ENCODE measurements at regions of chr21 and their contacts with region 1.

Region 1: DNA sequence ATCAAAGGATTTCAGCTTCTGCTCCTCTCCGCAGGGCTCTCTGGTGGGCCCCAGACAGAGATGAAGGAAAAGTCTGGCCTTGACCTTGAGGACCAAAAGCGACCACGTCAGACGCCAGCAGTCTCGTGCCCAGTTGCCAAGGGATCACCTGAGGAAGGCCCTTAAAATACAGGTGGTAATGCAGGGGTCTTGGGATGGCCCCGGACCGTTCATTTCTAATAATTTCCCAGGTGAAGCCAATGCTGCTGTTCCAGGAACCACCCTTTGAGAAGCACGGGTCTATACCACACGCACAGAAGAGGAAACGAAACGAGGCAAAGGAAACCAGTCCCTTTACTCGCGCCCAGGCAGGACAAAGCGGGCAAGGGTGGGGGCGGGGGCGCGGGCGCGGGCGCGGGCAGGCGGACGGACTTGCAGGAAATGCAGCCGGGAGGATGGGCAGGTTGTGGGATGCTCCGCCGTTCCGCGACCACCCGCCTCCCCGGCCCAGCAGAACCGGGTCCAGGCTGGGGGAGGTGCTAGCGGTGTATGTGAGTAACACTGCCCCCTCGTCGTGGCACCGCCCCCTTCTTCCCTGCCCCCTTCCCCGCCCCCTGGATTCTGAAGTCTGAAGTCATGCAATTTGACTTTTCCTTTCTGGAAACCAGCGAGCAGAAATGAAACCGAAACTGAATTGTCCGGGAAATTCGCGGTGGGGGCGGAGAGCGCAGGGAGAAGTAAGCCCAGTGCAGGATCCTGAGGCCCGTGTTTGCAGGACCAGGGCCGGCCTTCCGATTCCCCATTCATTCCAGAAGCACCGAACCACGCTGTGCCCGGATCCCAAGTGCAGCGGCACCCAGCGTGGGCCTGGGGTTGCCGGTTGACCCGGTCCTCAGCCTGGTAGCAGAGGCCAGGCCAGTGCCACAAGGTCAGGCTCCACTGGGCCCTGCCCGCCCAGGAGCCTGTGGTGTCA is 5.9 kb upstream of the MX1 start:
- DNase-seq: peak; percentile 53 to 93
- H3K4me3 ChIP-seq: peak overlapping the region; percentile 79 to 82
- H3K27ac ChIP-seq: peak overlapping the region; percentile 83 to 88
- H3K4me1 ChIP-seq: no peaks in the 10 kb centered on the region
- H3K27me3 ChIP-seq: no peaks in the 10 kb centered on the region
- CTCF ChIP-seq: no peak

Region 2: GRCh38 chr21:41247561-41248284 is 172.5 kb before region 1 on chr21:
- intact Hi-C with region 1: loop called (anchors 2 kb)
- DNase-seq: peak; percentile 78 to 94
- H3K4me3 ChIP-seq: peak overlapping the region; percentile 36 to 45
- H3K27ac ChIP-seq: peak overlapping the region; percentile 85 to 92
- H3K4me1 ChIP-seq: peaks cover 25 to 43% of the 10 kb centered on the region in 2 donors
- H3K27me3 ChIP-seq: no peaks in the 10 kb centered on the region
- CTCF ChIP-seq: no peak

Region 3: DNA sequence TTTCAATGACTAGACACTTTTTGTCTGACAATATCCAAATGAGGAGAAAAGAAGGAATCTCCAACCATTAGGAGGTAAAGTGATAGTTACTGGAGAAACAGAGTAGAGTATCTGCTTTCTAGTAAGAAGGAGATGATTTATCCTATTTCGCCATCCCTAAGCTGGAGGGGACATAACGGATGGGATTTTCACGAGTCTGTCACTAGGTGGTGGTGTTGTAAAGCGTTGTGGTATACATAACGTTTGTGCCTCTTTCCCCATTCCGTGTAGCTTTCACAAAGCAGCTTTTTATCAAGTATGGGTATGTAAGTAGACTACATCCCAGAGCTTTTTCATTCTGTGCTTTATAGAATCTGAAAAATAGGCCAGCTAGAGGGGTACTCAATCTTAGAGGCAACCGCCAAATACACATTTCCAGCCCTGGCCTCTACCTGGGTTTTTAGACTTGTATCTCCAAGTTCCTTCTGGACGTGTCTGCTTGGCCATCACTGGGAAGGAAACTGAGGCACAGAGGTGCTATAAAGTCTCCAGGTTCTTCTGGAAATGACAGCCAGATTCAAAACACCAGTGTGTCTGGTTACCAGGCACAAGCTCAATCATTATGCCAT is 136.9 kb before region 1 on chr21:
- intact Hi-C with region 1: loop called (anchors 10 kb)
- DNase-seq: peak in 1 of 2 donors; percentile 70
- H3K4me3 ChIP-seq: no peak overlapping the region
- H3K27ac ChIP-seq: no peak overlapping the region
- H3K4me1 ChIP-seq: no peaks in the 10 kb centered on the region
- H3K27me3 ChIP-seq: no peaks in the 10 kb centered on the region
- CTCF ChIP-seq: peak; percentile 67 to 82 (median 76)

Region 4: GRCh38 chr21:41431788-41432548 is 11.8 kb after region 1 on chr21:
- intact Hi-C with region 1: no loop called
- DNase-seq: no peak
- H3K4me3 ChIP-seq: no peak overlapping the region
- H3K27ac ChIP-seq: no peak overlapping the region
- H3K4me1 ChIP-seq: peaks cover 0 to under 1% of the 10 kb centered on the region in 2 donors
- H3K27me3 ChIP-seq: no peaks in the 10 kb centered on the region
- CTCF ChIP-seq: no peak

Region 5: DNA sequence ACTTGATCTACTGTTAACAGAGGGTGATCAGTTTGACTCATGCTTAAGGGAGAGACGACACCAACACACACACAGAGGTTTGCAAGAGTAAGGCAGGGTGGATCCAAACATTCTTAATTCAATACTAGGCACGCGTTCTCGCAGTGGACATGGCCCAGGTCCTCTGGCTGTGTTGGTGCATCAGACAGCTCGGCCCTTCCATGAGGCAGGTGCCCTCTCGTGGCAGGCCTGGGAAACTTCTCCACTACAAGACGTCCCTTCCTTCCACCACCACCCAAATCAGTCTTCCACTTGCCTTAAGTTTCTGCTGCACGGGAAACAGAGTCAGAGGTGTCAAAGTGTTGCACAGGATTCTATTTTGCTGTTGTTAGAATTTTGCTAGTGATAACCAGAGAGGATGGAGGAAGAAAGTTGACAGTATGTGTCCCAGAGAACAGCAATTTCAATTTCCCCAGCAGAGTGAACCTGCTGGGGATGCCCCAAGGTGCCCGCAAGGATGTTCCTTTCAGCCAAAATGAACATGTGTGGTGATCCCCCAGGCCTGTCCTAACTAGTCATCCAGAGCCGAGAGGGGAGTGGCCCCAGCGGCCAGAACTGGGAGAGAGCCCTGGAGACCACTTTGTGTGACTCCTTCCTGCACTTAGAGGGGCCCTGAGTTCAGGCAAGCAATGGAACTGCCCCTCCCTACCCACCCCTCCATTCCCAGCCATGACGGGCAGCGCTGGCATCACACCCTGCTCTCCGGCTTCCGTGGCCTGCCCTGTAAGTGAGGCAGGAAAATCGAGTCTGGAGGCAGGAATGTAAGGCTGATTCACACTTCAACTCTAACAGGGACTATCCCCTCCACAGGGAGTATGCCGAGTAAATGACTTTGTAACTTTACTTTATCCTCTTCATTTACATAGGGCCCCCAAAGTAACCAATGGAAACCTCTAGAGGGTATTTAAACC is 40.7 kb after region 1 on chr21:
- intact Hi-C with region 1: no loop called
- DNase-seq: peak; percentile 26 to 83
- H3K4me3 ChIP-seq: no peak overlapping the region
- H3K27ac ChIP-seq: no peak overlapping the region
- H3K4me1 ChIP-seq: no peaks in the 10 kb centered on the region
- H3K27me3 ChIP-seq: no peaks in the 10 kb centered on the region
- CTCF ChIP-seq: peak; percentile 63 to 78 (median 75)

Region 6: DNA sequence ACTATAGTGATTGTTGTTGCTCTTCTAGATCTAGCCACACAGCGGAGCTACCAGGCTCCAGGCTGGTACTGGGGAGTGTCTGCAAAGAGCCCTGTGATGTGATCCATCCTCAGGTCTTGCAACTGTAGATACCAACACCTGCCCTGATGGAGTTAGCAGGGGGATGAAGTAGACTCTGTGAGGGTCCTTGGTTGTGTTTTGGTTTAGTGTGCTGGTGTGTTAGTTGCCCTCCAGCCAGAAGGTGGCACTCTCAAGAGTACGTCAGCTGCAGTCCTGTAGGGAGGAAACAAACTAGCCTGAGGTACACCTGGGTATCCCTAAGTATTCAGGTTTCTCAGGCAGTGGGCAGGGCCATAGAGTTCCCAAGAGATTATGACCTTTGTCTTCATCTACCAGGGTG is 168.9 kb after region 1 on chr21:
- intact Hi-C with region 1: no loop called
- DNase-seq: peak in 1 of 2 donors; percentile 30
- H3K4me3 ChIP-seq: no peak overlapping the region
- H3K27ac ChIP-seq: no peak overlapping the region
- H3K4me1 ChIP-seq: no peaks in the 10 kb centered on the region
- H3K27me3 ChIP-seq: no peaks in the 10 kb centered on the region
- CTCF ChIP-seq: no peak

Region 7: DNA sequence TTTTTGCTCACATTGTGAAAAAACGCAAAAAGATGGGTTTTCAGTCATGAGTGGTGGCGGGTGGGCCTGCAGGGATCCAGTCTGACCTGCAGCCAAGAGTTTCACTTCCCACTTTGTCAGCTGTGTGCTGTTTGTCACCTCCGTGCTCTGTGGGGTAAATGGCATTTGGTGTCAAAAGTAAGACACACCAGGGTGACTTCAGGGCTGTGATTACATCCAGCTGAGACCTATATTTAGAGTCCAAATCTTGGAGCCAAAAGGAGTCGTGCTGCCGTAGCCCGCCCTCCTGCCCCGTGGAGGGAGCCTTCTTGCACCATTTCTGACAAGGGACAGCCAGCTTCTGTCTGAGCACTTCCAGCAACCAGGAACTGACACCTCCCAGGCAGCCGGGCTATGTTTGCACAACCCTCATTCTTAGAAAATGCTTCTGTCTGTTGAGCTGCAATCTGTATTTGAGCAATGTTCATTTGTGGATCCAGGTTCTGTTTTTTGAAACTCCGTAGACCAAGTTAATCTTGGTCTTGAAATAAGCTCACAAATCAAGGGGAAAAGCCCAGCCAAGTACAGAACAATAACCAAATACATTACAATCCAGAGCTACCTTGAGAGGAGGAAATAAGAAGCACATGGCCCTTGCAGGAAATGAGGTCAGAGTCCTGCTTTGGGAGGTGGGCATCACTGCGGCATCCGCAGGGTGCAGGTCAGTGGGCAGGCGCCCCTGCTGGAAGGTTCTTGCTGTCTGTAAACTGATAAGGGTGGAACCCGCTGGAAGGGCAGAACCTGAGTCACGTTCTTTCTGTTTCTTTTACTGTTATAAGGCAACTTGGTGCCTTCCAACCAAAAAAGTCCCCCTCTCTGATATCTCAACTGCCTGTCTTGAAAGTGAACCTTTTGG is 813.1 kb after region 1 on chr21:
- intact Hi-C with region 1: loop called (anchors 10 kb)
- DNase-seq: peak; percentile 47 to 87
- H3K4me3 ChIP-seq: peak overlapping the region in 1 of 2 donors; percentile 73
- H3K27ac ChIP-seq: peak overlapping the region; percentile 69 to 71
- H3K4me1 ChIP-seq: peaks cover 17 to 22% of the 10 kb centered on the region in 2 donors
- H3K27me3 ChIP-seq: no peaks in the 10 kb centered on the region
- CTCF ChIP-seq: peak; percentile 26 to 53 (median 39)

Measured in ascending aorta (tissue), 2 donors.